Heart right ventricle (tissue), 16 donors: ENCODE measurements at regions of chrX and their contacts with region 1.

Region 1: GRCh38 chrX:46653482-46653881 is 79.9 kb downstream of the CHST7 start:
- DNase-seq: no peak
- ATAC-seq: no peak
- H3K4me3 ChIP-seq: no peak overlapping the region
- H3K27ac ChIP-seq: no peak overlapping the region
- H3K4me1 ChIP-seq: peaks cover 0 to 22% (median 16%) of the 10 kb centered on the region in 9 donors
- H3K27me3 ChIP-seq: peaks cover 0 to 11% (median 0%) of the 10 kb centered on the region in 7 donors
- CTCF ChIP-seq: peak in 2 of 9 donors; percentile 13 to 25

Region 2: GRCh38 chrX:46686003-46686645 is 32.6 kb after region 1 on chrX:
- intact Hi-C with region 1: loop called in 2 of 10 experiments (anchors 5 kb)
- DNase-seq: peak in 1 of 2 donors; percentile 17
- ATAC-seq: peak in 4 of 8 donors; percentile 52 to 63 (median 58)
- H3K4me3 ChIP-seq: no peak overlapping the region
- H3K27ac ChIP-seq: no peak overlapping the region
- H3K4me1 ChIP-seq: peaks cover 0 to 4% (median 0%) of the 10 kb centered on the region in 9 donors
- H3K27me3 ChIP-seq: peaks cover 0 to 6% (median 0%) of the 10 kb centered on the region in 7 donors
- CTCF ChIP-seq: peak; percentile 49 to 79 (median 68)